Thyroid gland (tissue), 4 donors: ENCODE measurements at regions of chr10 and their contacts with region 1.

Region 1: DNA sequence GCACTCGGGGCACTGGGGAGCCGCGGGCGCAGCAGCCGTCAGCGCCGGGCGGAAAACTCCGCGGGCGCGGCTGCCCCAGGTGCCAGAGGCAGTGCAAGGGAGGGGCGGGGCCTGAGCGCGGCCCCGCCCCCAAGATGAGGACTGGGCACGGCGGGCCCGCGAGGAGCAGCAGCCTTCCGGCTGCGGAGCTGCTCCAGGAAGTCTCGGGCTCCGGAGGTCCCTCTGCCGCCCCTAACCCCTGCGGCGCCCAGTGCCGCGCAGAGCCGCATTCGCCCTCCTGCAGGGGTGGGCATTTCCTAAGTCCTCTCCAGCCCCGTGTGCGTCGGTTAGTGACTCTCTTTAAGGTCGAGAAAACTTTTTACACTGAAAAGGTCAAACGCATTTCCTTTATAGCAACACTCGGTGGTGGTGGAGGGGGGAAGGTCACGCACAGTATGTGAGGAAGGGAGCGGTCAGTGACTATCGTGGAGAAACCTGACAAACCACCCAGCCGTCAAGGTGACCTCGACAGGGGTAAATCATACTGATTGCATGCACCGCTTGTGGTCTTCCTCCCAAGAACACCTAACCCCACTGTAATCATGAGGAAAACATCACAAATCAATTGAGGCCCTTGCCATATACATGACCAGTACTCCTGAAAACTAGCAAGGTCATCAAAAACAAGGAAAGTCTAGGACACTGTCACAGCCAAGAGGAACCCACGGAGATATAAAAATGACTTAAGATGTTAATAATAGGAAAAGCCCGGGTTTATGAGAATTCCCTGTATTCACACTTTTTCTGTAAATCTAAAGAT is at the start of gene ANXA11:
- DNase-seq: peak; percentile 86 to 87
- H3K4me3 ChIP-seq: peak within 1 kb of the TSS; percentile 37 to 91 (median 85)
- H3K27ac ChIP-seq: peak within 1 kb of the TSS; percentile 97 to 99 (median 98)
- H3K4me1 ChIP-seq: peaks cover 34 to 47% of the 10 kb centered on the region in 2 donors
- H3K27me3 ChIP-seq: no peaks in the 10 kb centered on the region
- CTCF ChIP-seq: peak in 1 of 6 experiments; percentile 19
- POLR2A ChIP-seq: peak; percentile 73 to 95
- total RNA-seq, gene ANXA11: 77.5 to 106 (median 90.8) TPM

Region 2: DNA sequence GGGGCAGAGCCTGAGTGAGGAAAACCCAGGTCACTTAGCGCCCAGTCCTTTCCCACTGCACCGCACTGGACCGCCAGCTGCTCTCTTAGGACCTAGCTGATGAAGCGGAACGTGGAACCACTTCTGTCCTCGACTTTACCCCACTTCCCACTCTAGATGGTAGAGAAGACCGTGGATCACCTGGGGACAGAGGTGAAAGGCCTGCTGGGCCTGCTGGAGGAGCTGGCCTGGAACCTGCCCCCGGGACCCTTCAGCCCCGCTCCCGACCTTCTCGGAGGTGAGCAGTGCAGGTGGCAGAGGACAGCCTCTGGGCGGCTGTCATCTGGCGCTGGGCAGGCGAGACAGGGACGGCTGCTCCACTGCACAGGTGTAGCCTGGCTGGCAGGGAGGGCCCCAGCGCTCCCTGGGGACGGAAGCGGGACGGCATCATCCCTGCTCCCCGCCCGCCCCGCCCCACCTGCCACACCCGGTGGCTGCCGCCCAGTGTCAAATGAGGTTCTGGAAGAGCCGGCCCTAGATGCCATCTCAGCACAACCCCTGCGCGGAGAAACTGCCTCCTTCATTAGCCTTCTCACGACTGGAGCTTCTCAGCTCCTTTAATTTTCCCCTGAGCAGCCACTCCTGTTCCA is 61.5 kb before region 1 on chr10:
- intact Hi-C with region 1: no loop called
- DNase-seq: peak; percentile 34 to 43
- H3K4me3 ChIP-seq: no peak overlapping the region
- H3K27ac ChIP-seq: peak overlapping the region in 1 of 3 donors; percentile 15
- H3K4me1 ChIP-seq: peaks cover 10 to 12% of the 10 kb centered on the region in 2 donors
- H3K27me3 ChIP-seq: no peaks in the 10 kb centered on the region
- CTCF ChIP-seq: peak in 1 of 6 experiments; percentile 42
- POLR2A ChIP-seq: no peak

Region 3: DNA sequence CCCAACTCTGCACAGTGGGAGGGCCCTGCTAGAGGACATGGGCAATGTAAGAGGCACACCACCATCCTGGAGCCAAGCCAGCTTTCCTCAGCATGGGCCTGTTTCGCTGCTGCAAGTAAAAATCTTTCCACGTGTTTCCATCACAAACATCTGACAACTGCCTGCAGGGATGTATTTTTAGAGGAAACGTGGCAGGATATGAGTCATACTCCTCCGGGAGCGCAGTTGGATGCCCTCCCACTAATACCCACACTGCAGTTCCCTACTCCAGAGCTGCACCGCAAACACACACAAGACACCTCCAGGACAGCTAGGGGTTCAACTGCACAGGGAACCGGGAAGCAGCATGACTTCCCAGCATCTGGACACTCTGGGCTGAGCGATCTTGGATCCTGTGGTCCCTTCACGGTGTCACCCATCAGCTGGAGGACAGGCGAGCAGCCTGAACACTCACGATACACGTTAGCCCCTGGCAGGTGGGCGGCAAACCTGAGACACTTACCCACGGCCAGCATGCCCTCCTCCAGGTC is 47.0 kb before region 1 on chr10:
- intact Hi-C with region 1: loop called (anchors 10 kb)
- DNase-seq: peak; percentile 40 to 48
- H3K4me3 ChIP-seq: no peak overlapping the region
- H3K27ac ChIP-seq: peak overlapping the region in 2 of 3 donors; percentile 53 to 66
- H3K4me1 ChIP-seq: peaks cover 0 to 28% of the 10 kb centered on the region in 2 donors
- H3K27me3 ChIP-seq: no peaks in the 10 kb centered on the region
- CTCF ChIP-seq: no peak
- POLR2A ChIP-seq: no peak